ENCODE measurements at regions of chr6 and their contacts with region 1.

Region 1: DNA sequence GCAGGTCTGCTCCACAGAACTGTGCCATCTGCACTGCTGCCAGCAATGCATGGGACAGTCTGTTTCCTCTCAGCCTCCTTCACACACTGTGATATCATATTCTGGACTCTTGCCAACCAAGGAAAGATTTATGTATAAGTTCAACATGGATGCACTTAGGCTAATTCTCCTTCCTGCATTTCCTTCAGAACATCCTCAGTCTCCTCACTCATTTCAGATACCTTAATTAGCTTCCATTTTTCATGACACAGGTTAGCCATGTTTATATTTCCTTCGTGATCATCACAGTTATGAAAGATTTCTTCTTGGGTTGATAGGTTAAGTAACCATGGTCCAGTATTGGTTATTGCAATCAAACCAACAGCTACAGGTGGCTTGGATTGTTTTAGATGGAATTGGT is 46.4 kb upstream of the DDR1 start:
- DNase-seq: no peak
- H3K4me3 Mint-ChIP-seq: no peak overlapping the region
- H3K27ac Mint-ChIP-seq: peak overlapping the region; percentile 6
- H3K4me1 Mint-ChIP-seq: peaks cover 37% of the 10 kb centered on the region
- H3K27me3 Mint-ChIP-seq: no peaks in the 10 kb centered on the region
- CTCF ChIP-seq: no peak

Region 2: GRCh38 chr6:30870546-30870945 is 32.7 kb after region 1 on chr6:
- CTCF ChIA-PET with region 1: interaction called, 3 read pairs
- intact Hi-C with region 1: loop called (anchors 2 kb)
- DNase-seq: no peak
- H3K4me3 Mint-ChIP-seq: no peak overlapping the region
- H3K27ac Mint-ChIP-seq: peak overlapping the region; percentile 1
- H3K4me1 Mint-ChIP-seq: peaks cover 24% of the 10 kb centered on the region
- H3K27me3 Mint-ChIP-seq: no peaks in the 10 kb centered on the region
- CTCF ChIP-seq: no peak

Region 3: DNA sequence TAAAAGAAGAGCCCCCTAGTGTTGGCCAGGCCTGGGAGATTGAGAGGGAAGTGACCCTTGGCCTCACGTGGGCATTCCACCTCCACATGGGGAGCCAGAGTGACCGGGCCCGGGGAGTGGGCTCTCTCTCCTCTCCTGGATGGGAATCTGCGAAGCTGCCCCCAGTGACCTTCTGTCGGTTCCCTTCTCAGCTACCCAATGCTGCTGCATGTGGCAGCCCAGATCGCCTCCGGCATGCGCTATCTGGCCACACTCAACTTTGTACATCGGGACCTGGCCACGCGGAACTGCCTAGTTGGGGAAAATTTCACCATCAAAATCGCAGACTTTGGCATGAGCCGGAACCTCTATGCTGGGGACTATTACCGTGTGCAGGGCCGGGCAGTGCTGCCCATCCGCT is 60.0 kb after region 1 on chr6:
- CTCF ChIA-PET with region 1: no interaction called
- intact Hi-C with region 1: no loop called
- DNase-seq: no peak
- H3K4me3 Mint-ChIP-seq: no peak overlapping the region
- H3K27ac Mint-ChIP-seq: no peak overlapping the region
- H3K4me1 Mint-ChIP-seq: peaks cover 6% of the 10 kb centered on the region
- H3K27me3 Mint-ChIP-seq: no peaks in the 10 kb centered on the region
- CTCF ChIP-seq: no peak

Region 4: DNA sequence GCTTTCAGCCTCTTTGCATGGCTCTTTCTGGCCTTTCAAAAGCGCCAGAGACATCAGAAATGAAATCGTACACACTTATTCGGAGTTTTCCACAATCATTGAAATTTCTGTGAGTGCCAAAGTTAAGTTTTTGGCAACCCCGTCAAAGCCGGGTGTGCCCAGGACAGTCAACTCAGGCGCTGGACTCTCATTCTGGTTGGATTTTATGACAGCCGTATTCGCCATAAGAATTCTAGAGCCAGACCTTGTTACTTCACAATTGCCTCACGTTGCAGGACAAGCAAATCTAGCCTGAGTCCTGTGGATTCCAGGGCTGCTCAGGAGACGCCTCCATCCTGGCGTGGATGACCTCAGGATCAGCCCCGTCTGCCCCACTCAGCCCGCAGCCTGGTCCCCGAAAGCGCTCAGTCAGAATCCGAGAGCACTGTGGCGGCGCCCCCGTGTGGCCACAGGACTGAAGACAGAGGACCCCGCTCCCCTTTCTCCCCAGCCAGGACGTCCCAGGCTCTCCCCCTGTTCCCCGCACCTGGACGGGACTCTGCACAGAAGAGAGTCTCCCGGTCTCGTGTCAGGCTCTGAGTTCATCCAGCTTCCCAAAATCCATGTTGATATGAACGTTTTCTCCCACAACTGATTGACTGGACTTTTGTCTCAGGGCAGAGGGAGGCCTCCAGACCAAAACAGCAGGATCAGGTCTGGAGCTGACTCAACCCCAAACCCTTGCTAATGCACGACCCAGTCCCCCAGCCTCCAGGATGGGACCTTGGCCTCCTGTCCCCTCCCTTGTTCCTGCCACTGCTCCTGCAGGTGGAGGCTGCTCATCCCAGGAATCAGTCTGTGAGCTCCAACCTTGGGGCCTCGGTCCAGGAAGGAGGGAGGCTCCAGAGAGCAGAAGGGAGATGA is 603.7 kb after region 1 on chr6:
- CTCF ChIA-PET with region 1: interaction called, 10 read pairs
- intact Hi-C with region 1: no loop called
- DNase-seq: peak; percentile 93
- H3K4me3 Mint-ChIP-seq: no peak overlapping the region
- H3K27ac Mint-ChIP-seq: no peak overlapping the region
- H3K4me1 Mint-ChIP-seq: peaks cover 8% of the 10 kb centered on the region
- H3K27me3 Mint-ChIP-seq: peaks cover 90% of the 10 kb centered on the region
- CTCF ChIP-seq: peak; percentile 98